Ovary (tissue), 10 donors: ENCODE measurements at regions of chr21 and their contacts with region 1.

Region 1: DNA sequence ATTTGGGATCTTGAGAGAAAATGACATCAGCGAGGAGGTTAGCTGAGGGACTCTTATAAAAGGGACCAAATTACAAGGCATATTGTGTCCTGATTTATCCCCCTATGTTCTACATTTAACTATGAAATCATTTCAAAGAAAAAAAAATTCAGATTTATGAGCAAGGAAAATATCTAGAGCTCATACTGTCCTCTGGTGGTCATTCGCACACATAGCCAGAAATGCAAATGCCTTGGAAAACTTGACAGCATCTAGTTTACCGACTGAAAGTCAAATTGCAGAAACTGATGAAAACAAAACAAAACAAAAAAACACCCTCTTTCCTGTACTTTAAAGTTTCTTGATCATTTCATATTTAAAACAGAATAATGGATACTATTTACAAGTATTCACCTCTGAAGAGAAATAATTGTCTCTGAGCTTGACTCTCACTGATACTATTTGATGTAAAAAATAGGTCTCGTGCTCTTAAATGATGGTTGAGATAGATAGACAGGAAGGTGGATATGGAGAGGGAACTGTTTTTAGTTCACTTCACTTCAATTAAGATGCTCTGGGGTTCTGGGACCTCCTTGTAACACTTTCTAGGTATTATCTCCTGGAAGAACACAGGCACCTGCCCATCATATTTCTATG is 253.8 kb downstream of the PCP4 start:
- DNase-seq: no peak
- H3K4me3 ChIP-seq: no peak overlapping the region
- H3K27ac ChIP-seq: no peak overlapping the region
- H3K4me1 ChIP-seq: no peaks in the 10 kb centered on the region
- H3K27me3 ChIP-seq: no peaks in the 10 kb centered on the region
- CTCF ChIP-seq: peak in 2 of 3 donors; percentile 15 to 55
- EP300 ChIP-seq: no peak
- POLR2A ChIP-seq: no peak

Region 2: GRCh38 chr21:39867198-39867650 is 253.8 kb before region 1 on chr21 and contains the start of gene PCP4:
- intact Hi-C with region 1: loop called in 1 of 4 experiments (anchors 5 kb)
- DNase-seq: peak in 3 of 5 donors; percentile 28 to 51 (median 32)
- H3K4me3 ChIP-seq: peak within 1 kb of the TSS; percentile 3
- H3K27ac ChIP-seq: no peak within 1 kb of the TSS
- H3K4me1 ChIP-seq: no peaks in the 10 kb centered on the region
- H3K27me3 ChIP-seq: no peaks in the 10 kb centered on the region
- CTCF ChIP-seq: peak in 1 of 3 donors; percentile 22
- EP300 ChIP-seq: no peak
- POLR2A ChIP-seq: no peak
- total RNA-seq, gene PCP4: 0.65 to 4.7 (median 4.4) TPM in 4 of 7 donors, not detected in the others

Region 3: DNA sequence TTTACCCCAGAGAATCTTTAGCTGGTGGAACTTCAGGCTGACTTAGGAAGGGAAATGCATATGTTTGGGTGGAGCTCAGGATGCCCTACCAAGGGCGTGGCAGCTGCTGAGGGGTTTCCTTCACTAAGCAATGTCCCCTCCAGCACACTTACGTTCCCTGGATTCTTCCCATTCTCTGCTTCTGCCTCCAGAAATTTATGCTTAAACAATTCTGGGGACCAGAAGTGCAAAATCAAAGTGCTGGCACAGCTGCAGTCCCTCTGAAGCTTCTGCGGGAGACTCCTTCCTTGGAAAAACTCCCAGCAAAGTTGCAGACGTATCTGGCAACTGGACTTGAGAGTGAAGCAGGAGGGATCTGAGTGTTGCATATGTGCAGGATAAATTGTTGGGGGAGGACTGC is 149.0 kb after region 1 on chr21:
- intact Hi-C with region 1: no loop called
- DNase-seq: no peak
- H3K4me3 ChIP-seq: no peak overlapping the region
- H3K27ac ChIP-seq: no peak overlapping the region
- H3K4me1 ChIP-seq: no peaks in the 10 kb centered on the region
- H3K27me3 ChIP-seq: no peaks in the 10 kb centered on the region
- CTCF ChIP-seq: no peak
- EP300 ChIP-seq: no peak
- POLR2A ChIP-seq: no peak